Posterior vena cava (tissue), 2 donors: ENCODE measurements at regions of chr20 and their contacts with region 1.

Region 1: GRCh38 chr20:36827474-36827873 is 48.5 kb upstream of the TLDC2 start:
- DNase-seq: no peak

Region 2: DNA sequence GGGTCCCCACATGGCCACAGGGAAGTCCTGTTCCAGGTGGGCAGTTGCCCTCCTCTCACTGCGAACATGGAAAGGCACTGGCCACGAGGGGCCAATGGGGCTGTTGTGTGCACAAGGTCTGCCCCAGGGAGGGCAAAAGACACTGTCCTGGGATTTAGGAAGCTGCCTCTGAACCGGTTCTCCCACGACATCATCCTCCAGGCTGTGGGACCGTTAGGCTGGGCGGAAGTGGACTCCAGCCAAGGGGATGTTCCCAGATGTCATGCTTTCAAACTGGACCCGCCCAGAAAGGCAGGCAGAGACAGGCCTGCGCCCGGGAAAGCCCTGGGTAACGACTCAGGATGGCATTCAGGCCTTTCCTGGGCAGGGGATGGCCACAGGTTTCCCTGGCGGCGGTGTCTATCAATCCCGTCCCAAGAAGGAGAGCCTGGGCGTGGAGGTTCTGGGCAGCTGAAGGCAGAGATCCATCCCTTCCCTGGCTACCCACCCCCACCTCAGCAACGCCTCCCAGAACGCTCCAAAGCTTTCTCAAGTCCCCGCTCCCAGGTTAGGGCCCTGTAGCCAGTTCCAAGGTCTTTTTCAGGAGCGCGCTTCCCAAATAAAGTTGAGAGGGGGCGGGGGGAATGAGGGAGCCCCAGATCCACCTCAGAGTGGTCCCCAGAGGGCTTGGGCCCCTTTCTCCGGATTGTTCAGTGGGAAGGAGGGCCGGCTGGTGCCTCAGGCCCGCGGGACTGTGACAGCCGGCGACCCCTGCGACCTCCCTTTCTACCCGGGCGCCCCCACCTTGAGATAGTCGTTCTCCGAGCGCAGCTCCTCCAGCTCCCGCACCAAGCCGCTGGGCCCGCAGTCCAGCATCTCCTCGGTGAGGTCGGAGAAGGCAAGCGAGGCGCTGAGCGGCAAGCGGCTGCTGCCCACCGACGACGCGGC is 34.7 kb after region 1 on chr20:
- intact Hi-C with region 1: loop called in 1 of 2 experiments (anchors 5 kb)
- DNase-seq: peak; percentile 95